T-cell (primary cell): ENCODE measurements at regions of chr1 and their contacts with region 1.

Region 1: GRCh38 chr1:44002606-44003157 is 11.3 kb downstream of the CCDC24 start:
- DNase-seq: no peak
- ATAC-seq: no peak
- H3K4me3 ChIP-seq: no peak overlapping the region
- H3K4me3 Mint-ChIP-seq: no peak overlapping the region
- H3K27ac ChIP-seq: no peak overlapping the region
- H3K27ac Mint-ChIP-seq: no peak overlapping the region
- H3K4me1 ChIP-seq: no peaks in the 10 kb centered on the region
- H3K4me1 Mint-ChIP-seq: no peaks in the 10 kb centered on the region
- H3K27me3 ChIP-seq: peaks cover 0 to 10% of the 10 kb centered on the region in 2 experiments
- H3K27me3 Mint-ChIP-seq: no peaks in the 10 kb centered on the region

Region 2: DNA sequence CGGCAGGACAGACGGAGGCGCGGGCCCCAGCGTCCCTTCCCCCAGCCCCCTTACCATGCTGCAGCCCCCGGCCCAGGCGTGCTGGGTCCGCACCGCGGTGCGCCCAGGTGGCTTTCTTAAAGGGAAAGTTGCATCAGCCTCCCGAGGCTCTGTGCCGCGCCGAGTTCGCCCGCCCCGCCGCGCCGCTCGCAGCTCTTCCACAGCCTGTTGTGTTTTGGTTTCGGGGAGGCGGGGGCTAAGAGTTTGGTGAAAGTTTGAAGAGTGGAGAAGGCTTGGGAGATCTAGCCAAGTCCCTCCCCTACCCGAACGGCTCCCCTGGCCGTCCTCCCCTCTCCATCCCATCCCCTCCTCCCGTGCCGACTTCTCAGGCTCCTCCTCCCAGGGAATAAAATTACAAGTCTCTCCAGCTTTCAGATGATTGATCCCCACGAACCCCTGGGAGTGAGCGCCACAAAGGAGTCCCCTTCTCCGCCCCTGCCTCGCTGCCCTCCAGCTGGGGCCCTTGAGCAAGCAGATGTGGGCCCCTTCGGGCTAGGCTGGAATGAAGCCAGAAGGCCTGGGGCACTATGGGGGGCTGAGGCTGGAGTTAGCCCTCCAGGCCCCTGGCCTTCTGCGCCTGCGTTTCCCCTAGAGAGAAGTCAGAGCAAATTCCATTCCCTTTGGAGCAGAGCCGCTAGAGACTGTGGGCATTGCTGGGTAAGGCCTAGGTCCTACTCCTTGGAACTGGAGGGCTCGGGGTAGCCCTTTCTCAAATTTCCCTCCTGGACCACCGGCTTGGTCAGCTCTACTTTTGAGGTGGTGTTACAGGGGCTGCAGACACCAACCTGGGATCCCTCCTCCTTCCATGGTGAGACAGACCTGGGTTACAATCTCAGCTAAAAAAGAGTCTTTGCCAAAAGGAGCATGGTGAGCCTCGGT is 28.8 kb after region 1 on chr1 and contains the start of gene SLC6A9:
- CTCF ChIA-PET with region 1: interaction called, 11 to 17 read pairs
- POLR2A ChIA-PET with region 1: no interaction called
- DNase-seq: peak in 20 of 35 experiments; percentile 3 to 52 (median 20)
- ATAC-seq: peak in 2 of 4 experiments; percentile 2
- H3K4me3 ChIP-seq: peak within 1 kb of the TSS; percentile 66 to 79
- H3K4me3 Mint-ChIP-seq: peak within 1 kb of the TSS; percentile 80 to 93 (median 84)
- H3K27ac ChIP-seq: no peak within 1 kb of the TSS
- H3K27ac Mint-ChIP-seq: peak within 1 kb of the TSS; percentile 63 to 72
- H3K4me1 ChIP-seq: peaks cover 4 to 21% of the 10 kb centered on the region in 2 experiments
- H3K4me1 Mint-ChIP-seq: peaks cover 18 to 28% (median 28%) of the 10 kb centered on the region in 3 donors
- H3K27me3 ChIP-seq: no peaks in the 10 kb centered on the region
- H3K27me3 Mint-ChIP-seq: no peaks in the 10 kb centered on the region
- total RNA-seq, gene SLC6A9: 1.4 to 8.2 (median 6.3) TPM in 4 of 5 donors, not detected in the other

Region 3: GRCh38 chr1:44036409-44037139 is 33.9 kb after region 1 on chr1:
- CTCF ChIA-PET with region 1: interaction called, 11 to 17 read pairs
- POLR2A ChIA-PET with region 1: no interaction called
- DNase-seq: peak; percentile 20 to 80 (median 53)
- ATAC-seq: peak; percentile 64 to 85 (median 74)
- H3K4me3 ChIP-seq: no peak overlapping the region
- H3K4me3 Mint-ChIP-seq: no peak overlapping the region
- H3K27ac ChIP-seq: no peak overlapping the region
- H3K27ac Mint-ChIP-seq: no peak overlapping the region
- H3K4me1 ChIP-seq: peaks cover 0 to 2% of the 10 kb centered on the region in 2 experiments
- H3K4me1 Mint-ChIP-seq: peaks cover 0 to 12% (median 10%) of the 10 kb centered on the region in 3 donors
- H3K27me3 ChIP-seq: no peaks in the 10 kb centered on the region
- H3K27me3 Mint-ChIP-seq: no peaks in the 10 kb centered on the region